ENCODE measurements at regions of chr3 and their contacts with region 1.

Region 1: GRCh38 chr3:48609088-48610005 is at the start of gene UQCRC1:
- DNase-seq: peak; percentile 93 to 97
- ATAC-seq: peak; percentile 99 to 100 (median 100)
- H3K4me3 ChIP-seq: peak within 1 kb of the TSS; percentile 97
- H3K27ac ChIP-seq: peak within 1 kb of the TSS; percentile 91
- H3K4me1 ChIP-seq: peaks cover 29% of the 10 kb centered on the region
- H3K27me3 ChIP-seq: no peaks in the 10 kb centered on the region
- CTCF ChIP-seq: peak; percentile 79
- total RNA-seq, gene UQCRC1: 466 to 704 (median 587) TPM

Region 2: DNA sequence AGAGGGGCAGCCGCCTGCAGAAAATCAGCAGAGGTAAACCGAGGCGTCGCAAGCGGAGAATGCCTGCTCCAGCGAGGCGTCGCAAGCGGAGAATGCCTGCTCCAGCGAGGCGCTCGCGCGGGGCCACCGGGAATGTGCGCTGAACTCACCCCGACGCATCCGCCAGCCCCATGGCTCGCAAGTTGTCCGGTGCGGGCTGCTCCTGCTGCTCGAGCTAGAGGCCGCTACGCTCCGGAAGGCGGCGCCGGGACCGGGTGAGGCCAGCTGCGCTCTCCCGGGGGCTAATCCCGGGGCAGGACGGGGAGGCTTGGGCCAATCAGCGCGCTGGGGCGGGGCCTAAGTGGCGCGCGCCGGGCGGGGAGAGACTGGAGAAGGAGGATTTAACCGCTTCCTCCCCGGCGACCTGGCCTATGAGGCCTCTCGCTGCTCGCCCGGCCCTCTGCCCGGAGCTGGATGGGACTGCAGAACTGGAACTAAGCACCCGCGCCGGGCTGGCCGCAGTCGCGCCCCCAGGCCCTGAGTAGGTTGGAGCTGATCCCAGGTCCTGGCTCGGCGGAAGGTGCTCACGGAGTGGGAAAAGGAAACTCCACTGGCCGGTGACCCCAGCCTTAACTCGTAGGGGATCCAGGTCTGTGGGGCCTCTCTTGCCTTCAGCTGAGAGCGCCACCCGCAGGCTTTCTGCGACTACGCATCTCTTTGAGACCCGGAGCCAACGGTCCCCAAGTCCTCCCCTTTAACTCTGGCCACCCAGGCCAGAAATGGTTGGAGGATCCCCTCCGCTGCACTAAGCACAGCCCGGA is 26.1 kb after region 1 on chr3 and contains the start of gene SLC26A6:
- intact Hi-C with region 1: loop called in 1 of 2 experiments (anchors 2 kb)
- DNase-seq: peak; percentile 98
- ATAC-seq: peak; percentile 97 to 99 (median 98)
- H3K4me3 ChIP-seq: peak within 1 kb of the TSS; percentile 92
- H3K27ac ChIP-seq: peak within 1 kb of the TSS; percentile 79
- H3K4me1 ChIP-seq: peaks cover 19% of the 10 kb centered on the region
- H3K27me3 ChIP-seq: no peaks in the 10 kb centered on the region
- CTCF ChIP-seq: peak; percentile 23
- total RNA-seq, gene SLC26A6: 5.6 to 13.0 (median 6.6) TPM

Region 3: DNA sequence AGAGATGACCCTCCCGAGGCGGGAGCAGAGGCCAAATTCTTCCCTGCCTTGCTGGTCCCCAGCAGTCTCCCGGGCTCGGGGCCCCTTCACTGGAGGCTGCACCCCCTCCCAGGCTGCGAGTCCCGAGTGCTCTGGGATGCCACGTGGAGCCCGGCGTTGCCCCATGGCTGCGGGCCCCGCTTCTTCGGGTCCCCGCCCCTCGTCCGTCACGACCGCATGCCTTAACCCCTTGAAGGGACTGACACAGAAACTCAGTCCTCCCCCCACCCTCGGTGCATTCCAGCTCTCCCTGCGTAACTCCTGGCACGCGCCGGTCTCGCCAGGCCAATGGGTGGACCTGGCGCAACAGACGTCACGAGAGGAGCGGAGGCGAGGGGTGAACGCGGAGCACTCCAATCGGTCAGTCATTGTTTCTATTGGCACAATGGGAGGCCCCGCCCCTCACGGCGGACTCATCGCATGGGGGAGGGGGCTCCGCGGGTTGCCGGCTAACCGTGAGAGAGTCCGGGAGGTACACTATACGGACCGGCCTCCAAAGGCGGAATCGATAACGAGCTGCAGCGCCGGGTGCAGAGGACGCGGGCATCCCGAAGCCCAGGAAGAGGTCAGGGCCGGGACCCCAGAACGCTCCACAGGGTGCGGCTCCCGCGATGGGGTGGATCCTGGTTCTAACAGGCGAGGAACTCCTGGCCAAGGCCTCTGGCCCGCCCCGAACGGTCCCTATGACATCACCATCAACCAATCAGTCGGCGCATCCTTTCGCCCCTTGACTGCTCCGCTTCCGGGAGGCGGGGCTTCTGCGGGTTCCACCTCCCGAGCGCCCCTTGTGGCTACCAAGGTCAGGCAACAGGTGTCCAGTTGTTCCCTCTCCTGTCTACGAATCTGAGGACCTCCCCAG is 54.3 kb after region 1 on chr3:
- intact Hi-C with region 1: no loop called
- DNase-seq: peak; percentile 83 to 88
- ATAC-seq: peak; percentile 59 to 81 (median 74)
- H3K4me3 ChIP-seq: peak overlapping the region; percentile 63
- H3K27ac ChIP-seq: no peak overlapping the region
- H3K4me1 ChIP-seq: peaks cover 19% of the 10 kb centered on the region
- H3K27me3 ChIP-seq: peaks cover 0 to 47% (median 20%) of the 10 kb centered on the region in 3 donors
- CTCF ChIP-seq: peak; percentile 39